BJ (cell line): ENCODE measurements at regions of chr17 and their contacts with region 1.

Region 1: GRCh38 chr17:65008882-65009281 is 47.7 kb downstream of the GNA13 start:
- DNase-seq: no peak
- H3K4me3 ChIP-seq: no peak overlapping the region
- H3K27me3 ChIP-seq: no peaks in the 10 kb centered on the region
- CTCF ChIP-seq: no peak

Region 2: DNA sequence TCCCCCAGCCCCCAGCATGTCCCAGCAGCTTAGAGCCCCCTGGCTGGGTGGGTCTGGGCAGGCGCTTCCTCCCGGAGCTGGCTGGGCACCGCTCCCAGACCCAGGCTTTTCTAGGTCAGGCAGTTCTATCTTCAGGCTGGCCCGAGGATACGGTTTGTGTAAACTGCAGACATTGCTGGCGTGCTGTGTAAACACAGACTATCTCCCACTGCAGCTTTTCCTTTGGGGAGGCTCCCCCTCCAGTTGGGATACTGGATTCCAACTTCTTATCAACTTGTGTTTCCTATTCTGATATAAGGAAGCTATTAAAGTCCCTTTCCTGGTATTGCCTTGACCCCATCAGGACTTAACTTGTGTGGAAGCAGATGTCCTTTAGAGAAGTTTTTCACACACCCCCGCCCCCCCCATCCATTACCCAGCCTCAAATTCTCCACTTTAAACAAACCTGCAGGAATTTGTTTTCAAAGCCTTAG is 65.9 kb after region 1 on chr17:
- CTCF ChIA-PET with region 1: no interaction called
- POLR2A ChIA-PET with region 1: interaction called, 15 read pairs
- DNase-seq: no peak
- H3K4me3 ChIP-seq: no peak overlapping the region
- H3K27me3 ChIP-seq: no peaks in the 10 kb centered on the region
- CTCF ChIP-seq: 0 out of 2 replicates have a peak, but pooled peaks have one; percentile 4